Psoas muscle (tissue), 8 donors: ENCODE measurements at regions of chr22 and their contacts with region 1.

Region 1: GRCh38 chr22:29907815-29908515 is 25.0 kb downstream of the MTMR3 start:
- DNase-seq: peak; percentile 78 to 90
- ATAC-seq: peak; percentile 87 to 90 (median 89)
- H3K4me3 ChIP-seq: peak overlapping the region; percentile 43
- H3K27ac ChIP-seq: peak overlapping the region; percentile 74
- H3K4me1 ChIP-seq: peaks cover 90% of the 10 kb centered on the region
- H3K27me3 ChIP-seq: no peaks in the 10 kb centered on the region
- CTCF ChIP-seq: no peak

Region 2: DNA sequence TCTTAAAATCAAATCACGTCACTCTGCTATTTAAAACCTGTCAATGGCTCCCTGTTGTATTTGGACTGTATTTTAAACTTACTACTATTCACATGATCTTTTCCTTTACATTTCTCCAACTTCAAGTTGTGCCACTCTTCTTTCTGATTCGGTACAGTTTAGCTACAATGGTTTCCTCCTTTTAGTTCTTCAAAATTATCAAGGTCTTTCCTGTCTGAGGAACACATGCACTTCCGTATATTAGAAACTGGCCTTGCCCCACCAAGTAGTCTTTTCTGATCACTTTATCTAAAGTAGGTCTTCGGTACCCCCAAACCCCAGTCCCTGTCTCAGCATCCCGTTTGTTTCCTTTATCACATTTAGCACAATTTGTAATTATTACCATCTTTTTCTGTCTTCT is 56.8 kb after region 1 on chr22:
- intact Hi-C with region 1: loop called in 1 of 2 experiments (anchors 10 kb)
- DNase-seq: no peak
- ATAC-seq: peak in 2 of 4 donors; percentile 9 to 10
- H3K4me3 ChIP-seq: no peak overlapping the region
- H3K27ac ChIP-seq: peak overlapping the region; percentile 44
- H3K4me1 ChIP-seq: peaks cover 16% of the 10 kb centered on the region
- H3K27me3 ChIP-seq: no peaks in the 10 kb centered on the region
- CTCF ChIP-seq: no peak